Naive thymus-derived CD4-positive, alpha-beta T cell (primary cell): ENCODE measurements at regions of chr3 and their contacts with region 1.

Region 1: GRCh38 chr3:197256836-197257444 is 41.5 kb downstream of the DLG1 start:
- DNase-seq: peak in 7 of 9 donors; percentile 24 to 63 (median 50)
- ATAC-seq: peak; percentile 48
- H3K4me3 ChIP-seq: no peak overlapping the region
- H3K4me3 Mint-ChIP-seq: no peak overlapping the region
- H3K27ac ChIP-seq: no peak overlapping the region
- H3K27ac Mint-ChIP-seq: peak overlapping the region in 1 of 9 donors; percentile 0
- H3K4me1 ChIP-seq: peaks cover 4 to 19% of the 10 kb centered on the region in 2 donors
- H3K4me1 Mint-ChIP-seq: peaks cover 32 to 92% (median 83%) of the 10 kb centered on the region in 7 donors
- H3K27me3 ChIP-seq: no peaks in the 10 kb centered on the region
- H3K27me3 Mint-ChIP-seq: no peaks in the 10 kb centered on the region

Region 2: GRCh38 chr3:196914866-196915265 is 342.1 kb before region 1 on chr3:
- CTCF ChIA-PET with region 1: no interaction called
- POLR2A ChIA-PET with region 1: no interaction called
- intact Hi-C with region 1: no loop called
- DNase-seq: no peak
- ATAC-seq: no peak
- H3K4me3 ChIP-seq: no peak overlapping the region
- H3K4me3 Mint-ChIP-seq: no peak overlapping the region
- H3K27ac ChIP-seq: no peak overlapping the region
- H3K27ac Mint-ChIP-seq: no peak overlapping the region
- H3K4me1 ChIP-seq: no peaks in the 10 kb centered on the region
- H3K4me1 Mint-ChIP-seq: peaks cover 0 to 1% (median 0%) of the 10 kb centered on the region in 7 donors
- H3K27me3 ChIP-seq: no peaks in the 10 kb centered on the region
- H3K27me3 Mint-ChIP-seq: no peaks in the 10 kb centered on the region

Region 3: GRCh38 chr3:197224034-197224444 is 32.9 kb before region 1 on chr3:
- CTCF ChIA-PET with region 1: interaction called, 10 read pairs
- POLR2A ChIA-PET with region 1: no interaction called
- intact Hi-C with region 1: loop called in 1 of 2 experiments (anchors 1 kb)
- DNase-seq: peak in 5 of 9 donors; percentile 23 to 43 (median 36)
- ATAC-seq: no peak
- H3K4me3 ChIP-seq: no peak overlapping the region
- H3K4me3 Mint-ChIP-seq: no peak overlapping the region
- H3K27ac ChIP-seq: no peak overlapping the region
- H3K27ac Mint-ChIP-seq: no peak overlapping the region
- H3K4me1 ChIP-seq: no peaks in the 10 kb centered on the region
- H3K4me1 Mint-ChIP-seq: peaks cover 17 to 73% (median 45%) of the 10 kb centered on the region in 7 donors
- H3K27me3 ChIP-seq: no peaks in the 10 kb centered on the region
- H3K27me3 Mint-ChIP-seq: no peaks in the 10 kb centered on the region

Region 4: DNA sequence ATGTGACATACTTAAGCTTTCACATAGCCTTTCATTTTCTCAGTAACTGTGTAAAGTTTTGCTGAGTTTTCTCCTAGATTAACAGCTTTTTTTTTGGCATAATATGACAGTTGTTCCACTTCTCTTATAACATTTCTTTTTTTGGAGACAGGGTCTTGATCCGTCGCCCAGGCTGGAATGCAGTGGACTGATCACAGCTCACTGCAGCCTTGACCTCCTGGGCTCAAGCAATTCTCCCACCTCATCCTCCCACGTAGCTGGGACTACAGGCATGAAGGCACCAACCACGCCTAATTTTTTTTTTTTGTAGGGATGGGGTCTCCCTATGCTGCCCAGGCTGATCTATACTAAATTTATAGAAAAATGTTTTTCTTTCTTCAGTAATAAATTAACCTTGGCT is 11.4 kb after region 1 on chr3:
- CTCF ChIA-PET with region 1: interaction called, 17 read pairs
- POLR2A ChIA-PET with region 1: interaction called, 3 read pairs
- intact Hi-C with region 1: no loop called
- DNase-seq: no peak
- ATAC-seq: no peak
- H3K4me3 ChIP-seq: no peak overlapping the region
- H3K4me3 Mint-ChIP-seq: no peak overlapping the region
- H3K27ac ChIP-seq: no peak overlapping the region
- H3K27ac Mint-ChIP-seq: peak overlapping the region in 1 of 9 donors; percentile 36
- H3K4me1 ChIP-seq: peaks cover 0 to 10% of the 10 kb centered on the region in 2 donors
- H3K4me1 Mint-ChIP-seq: peaks cover 21 to 67% (median 57%) of the 10 kb centered on the region in 7 donors
- H3K27me3 ChIP-seq: no peaks in the 10 kb centered on the region
- H3K27me3 Mint-ChIP-seq: no peaks in the 10 kb centered on the region

Region 5: GRCh38 chr3:197305854-197306253 is 48.9 kb after region 1 on chr3:
- CTCF ChIA-PET with region 1: no interaction called
- POLR2A ChIA-PET with region 1: no interaction called
- intact Hi-C with region 1: no loop called
- DNase-seq: peak in 2 of 9 donors; percentile 14 to 37
- ATAC-seq: peak; percentile 67
- H3K4me3 ChIP-seq: no peak overlapping the region
- H3K4me3 Mint-ChIP-seq: no peak overlapping the region
- H3K27ac ChIP-seq: no peak overlapping the region
- H3K27ac Mint-ChIP-seq: peak overlapping the region in 2 of 9 donors; percentile 35 to 44
- H3K4me1 ChIP-seq: peaks cover 0 to 12% of the 10 kb centered on the region in 2 donors
- H3K4me1 Mint-ChIP-seq: peaks cover 0 to 31% (median 9%) of the 10 kb centered on the region in 7 donors
- H3K27me3 ChIP-seq: no peaks in the 10 kb centered on the region
- H3K27me3 Mint-ChIP-seq: peaks cover 0 to 28% (median 9%) of the 10 kb centered on the region in 5 donors

Region 6: DNA sequence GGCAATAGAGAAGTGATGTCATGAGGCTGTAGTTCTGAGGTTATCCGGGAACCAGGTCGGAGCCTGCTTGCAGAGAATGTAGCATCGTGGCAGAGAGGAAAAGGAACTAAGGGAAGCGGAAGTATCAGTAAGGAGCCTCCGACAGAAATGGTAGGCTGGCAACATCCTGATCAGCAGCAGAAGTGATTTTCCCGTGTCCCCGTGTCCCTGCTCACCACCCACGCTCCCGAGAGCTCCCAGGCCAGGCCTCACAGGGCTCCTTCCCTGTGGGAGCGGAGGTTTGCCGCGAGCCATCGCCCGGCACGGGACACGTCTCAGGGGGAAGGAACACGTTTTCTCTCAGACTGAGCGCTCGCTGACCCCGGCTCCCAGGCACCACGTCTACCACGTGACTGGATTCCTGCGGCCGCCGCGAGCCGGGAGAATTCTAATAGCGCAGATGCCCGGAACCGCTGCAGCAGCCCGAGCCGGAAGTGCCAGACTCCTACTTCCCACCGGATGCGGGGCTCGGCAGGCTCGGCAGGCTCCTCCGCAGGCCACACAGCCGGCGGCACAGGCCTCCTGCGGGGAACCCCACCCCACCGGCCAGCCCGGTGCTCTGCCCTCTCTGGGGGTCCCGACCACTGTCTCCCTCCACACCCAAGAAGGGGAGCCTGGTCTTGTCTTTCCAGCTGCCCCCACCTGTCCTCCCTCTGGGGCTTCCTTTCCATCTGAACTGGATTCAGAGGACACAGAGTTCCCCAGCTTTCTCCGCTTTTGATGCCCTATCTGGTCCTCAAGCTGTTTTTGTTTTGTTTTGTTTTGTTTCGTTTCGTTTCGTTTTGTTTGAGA is 199.5 kb after region 1 on chr3:
- CTCF ChIA-PET with region 1: interaction called, 23 read pairs
- POLR2A ChIA-PET with region 1: no interaction called
- intact Hi-C with region 1: loop called (anchors 1 kb)
- DNase-seq: peak in 7 of 9 donors; percentile 3 to 60 (median 23)
- ATAC-seq: peak; percentile 48
- H3K4me3 ChIP-seq: peak overlapping the region; percentile 93
- H3K4me3 Mint-ChIP-seq: peak overlapping the region; percentile 87 to 97 (median 94)
- H3K27ac ChIP-seq: peak overlapping the region; percentile 65
- H3K27ac Mint-ChIP-seq: peak overlapping the region; percentile 84 to 95 (median 91)
- H3K4me1 ChIP-seq: peaks cover 0 to 9% of the 10 kb centered on the region in 2 donors
- H3K4me1 Mint-ChIP-seq: peaks cover 13 to 34% (median 23%) of the 10 kb centered on the region in 7 donors
- H3K27me3 ChIP-seq: no peaks in the 10 kb centered on the region
- H3K27me3 Mint-ChIP-seq: peaks cover 0 to 24% (median 0%) of the 10 kb centered on the region in 5 donors

Region 7: DNA sequence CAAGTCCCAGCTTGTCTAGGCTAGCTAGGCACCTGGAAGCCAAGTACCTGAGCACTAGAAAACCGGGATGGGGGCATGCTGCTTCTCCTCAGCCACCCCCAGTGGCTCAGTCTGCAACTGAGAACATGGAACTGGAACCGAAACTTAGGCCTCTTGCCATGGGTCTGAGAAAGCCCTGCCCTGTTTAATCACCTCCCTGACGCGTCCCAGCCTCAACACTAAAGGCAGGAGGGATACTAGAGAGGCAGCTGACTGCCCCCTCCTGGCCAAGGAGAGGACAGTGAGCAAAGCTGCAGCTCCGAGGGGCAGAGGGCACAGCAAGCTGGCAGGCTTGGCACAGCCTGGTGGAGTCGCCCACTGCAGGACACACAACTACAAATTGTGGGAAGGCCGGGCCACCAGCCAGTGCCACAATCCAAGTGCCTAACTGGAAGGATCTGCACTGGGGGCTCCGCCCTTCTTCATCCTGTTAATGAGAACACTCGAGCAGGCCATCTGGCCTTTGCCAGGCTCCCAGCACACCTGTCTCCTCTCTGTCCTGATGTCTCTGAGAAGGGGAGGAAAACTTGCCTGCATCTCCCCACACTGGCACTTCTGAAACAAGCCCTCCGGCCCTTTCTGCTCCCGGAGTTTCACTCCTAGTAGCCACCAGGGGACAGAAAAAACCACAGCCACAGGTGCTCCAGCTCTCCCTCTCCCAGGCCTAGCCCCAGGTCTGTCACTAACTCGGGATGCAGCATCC is 245.1 kb after region 1 on chr3:
- CTCF ChIA-PET with region 1: interaction called, 13 read pairs
- POLR2A ChIA-PET with region 1: interaction called, 3 read pairs
- intact Hi-C with region 1: loop called in 1 of 2 experiments (anchors 2 kb)
- DNase-seq: peak in 5 of 9 donors; percentile 19 to 41 (median 30)
- ATAC-seq: peak; percentile 81
- H3K4me3 ChIP-seq: no peak overlapping the region
- H3K4me3 Mint-ChIP-seq: no peak overlapping the region
- H3K27ac ChIP-seq: no peak overlapping the region
- H3K27ac Mint-ChIP-seq: no peak overlapping the region
- H3K4me1 ChIP-seq: no peaks in the 10 kb centered on the region
- H3K4me1 Mint-ChIP-seq: no peaks in the 10 kb centered on the region
- H3K27me3 ChIP-seq: no peaks in the 10 kb centered on the region
- H3K27me3 Mint-ChIP-seq: no peaks in the 10 kb centered on the region

Region 8: GRCh38 chr3:197511130-197511529 is 254.2 kb after region 1 on chr3:
- CTCF ChIA-PET with region 1: interaction called, 22 read pairs
- POLR2A ChIA-PET with region 1: no interaction called
- intact Hi-C with region 1: loop called (anchors 1 kb)
- DNase-seq: no peak
- ATAC-seq: no peak
- H3K4me3 ChIP-seq: no peak overlapping the region
- H3K4me3 Mint-ChIP-seq: no peak overlapping the region
- H3K27ac ChIP-seq: no peak overlapping the region
- H3K27ac Mint-ChIP-seq: no peak overlapping the region
- H3K4me1 ChIP-seq: no peaks in the 10 kb centered on the region
- H3K4me1 Mint-ChIP-seq: peaks cover 0 to 10% (median 9%) of the 10 kb centered on the region in 7 donors
- H3K27me3 ChIP-seq: no peaks in the 10 kb centered on the region
- H3K27me3 Mint-ChIP-seq: no peaks in the 10 kb centered on the region